ENCODE measurements at regions of chr1 and their contacts with region 1.

Region 1: GRCh38 chr1:19715334-19716203 is 50.9 kb downstream of the HTR6 start:
- DNase-seq: peak; percentile 66
- ATAC-seq: peak; percentile 89
- H3K4me3 ChIP-seq: no peak overlapping the region
- H3K27ac ChIP-seq: no peak overlapping the region
- H3K4me1 ChIP-seq: peaks cover 22% of the 10 kb centered on the region
- H3K27me3 ChIP-seq: no peaks in the 10 kb centered on the region
- CTCF ChIP-seq: peak; percentile 85 to 91 (median 87)
- EP300 ChIP-seq: no peak
- POLR2A ChIP-seq: no peak
- RAD21 ChIP-seq: peak; percentile 63

Region 2: DNA sequence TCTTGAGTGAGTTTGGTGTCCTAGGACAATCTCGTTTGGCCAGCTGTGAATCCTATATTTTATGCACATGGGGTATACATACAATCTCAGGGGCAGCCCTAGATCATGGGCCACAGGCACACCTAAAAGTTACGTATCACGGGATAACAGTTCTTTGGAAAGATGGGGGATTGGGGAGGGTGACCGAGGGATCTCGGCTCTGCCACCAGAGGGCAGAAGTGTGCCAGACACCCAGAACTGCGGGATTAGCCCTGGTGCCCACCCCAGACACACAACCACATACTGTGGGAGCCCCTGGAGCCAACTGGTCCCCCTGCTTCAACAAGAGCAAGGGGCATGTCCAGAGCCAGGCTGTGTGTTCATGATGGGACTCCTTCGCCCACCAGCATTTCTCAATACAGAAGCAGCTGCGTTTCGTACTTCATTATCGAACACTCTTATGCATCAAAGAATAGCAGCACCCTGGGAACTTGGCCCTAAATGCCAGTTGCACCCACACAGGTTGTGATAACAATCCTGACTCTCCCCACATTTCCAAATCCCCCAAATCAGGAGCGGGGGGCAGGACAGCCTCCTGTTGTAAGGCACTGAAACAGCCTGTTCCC is 46.7 kb after region 1 on chr1:
- CTCF ChIA-PET with region 1: interaction called, 10 read pairs
- POLR2A ChIA-PET with region 1: no interaction called
- RAD21 ChIA-PET with region 1: no interaction called
- SMC1A ChIA-PET with region 1: interaction called, 3 read pairs
- in situ Hi-C with region 1: no loop called
- intact Hi-C with region 1: no loop called
- DNase-seq: no peak
- ATAC-seq: peak; percentile 81
- H3K4me3 ChIP-seq: no peak overlapping the region
- H3K27ac ChIP-seq: no peak overlapping the region
- H3K4me1 ChIP-seq: peaks cover 3% of the 10 kb centered on the region
- H3K27me3 ChIP-seq: no peaks in the 10 kb centered on the region
- CTCF ChIP-seq: peak; percentile 63 to 84 (median 80)
- EP300 ChIP-seq: no peak
- POLR2A ChIP-seq: no peak
- RAD21 ChIP-seq: peak; percentile 55

Region 3: DNA sequence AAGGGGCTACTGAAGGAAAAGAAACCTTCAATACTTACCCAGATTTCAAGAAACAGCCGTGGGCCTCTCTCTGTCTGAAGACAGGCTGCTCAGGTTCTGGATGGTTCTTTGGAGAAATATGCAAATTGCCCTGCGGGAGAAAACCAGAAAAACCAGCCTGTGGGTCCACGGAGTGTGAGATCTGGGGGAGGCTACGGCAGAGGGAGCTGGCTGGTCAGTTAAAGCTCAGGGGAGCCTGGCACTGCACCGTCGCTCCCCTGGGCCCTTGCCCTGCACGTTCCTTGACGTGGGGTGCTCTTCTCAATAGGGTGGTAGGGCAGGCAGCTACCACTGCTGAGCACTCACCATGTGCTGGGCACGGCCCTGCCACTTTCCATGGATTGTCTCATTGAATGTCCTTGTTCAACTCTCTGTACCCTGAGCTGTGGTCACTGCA is 71.4 kb after region 1 on chr1:
- CTCF ChIA-PET with region 1: no interaction called
- POLR2A ChIA-PET with region 1: no interaction called
- RAD21 ChIA-PET with region 1: no interaction called
- SMC1A ChIA-PET with region 1: no interaction called
- in situ Hi-C with region 1: no loop called
- intact Hi-C with region 1: no loop called
- DNase-seq: no peak
- ATAC-seq: no peak
- H3K4me3 ChIP-seq: no peak overlapping the region
- H3K27ac ChIP-seq: no peak overlapping the region
- H3K4me1 ChIP-seq: peaks cover 6% of the 10 kb centered on the region
- H3K27me3 ChIP-seq: no peaks in the 10 kb centered on the region
- CTCF ChIP-seq: no peak
- EP300 ChIP-seq: no peak
- POLR2A ChIP-seq: no peak
- RAD21 ChIP-seq: no peak

Measured in GM12878 (cell line).